Right ventricle myocardium superior (tissue), 1 donor: ENCODE measurements at regions of chr5 and their contacts with region 1.

Region 1: DNA sequence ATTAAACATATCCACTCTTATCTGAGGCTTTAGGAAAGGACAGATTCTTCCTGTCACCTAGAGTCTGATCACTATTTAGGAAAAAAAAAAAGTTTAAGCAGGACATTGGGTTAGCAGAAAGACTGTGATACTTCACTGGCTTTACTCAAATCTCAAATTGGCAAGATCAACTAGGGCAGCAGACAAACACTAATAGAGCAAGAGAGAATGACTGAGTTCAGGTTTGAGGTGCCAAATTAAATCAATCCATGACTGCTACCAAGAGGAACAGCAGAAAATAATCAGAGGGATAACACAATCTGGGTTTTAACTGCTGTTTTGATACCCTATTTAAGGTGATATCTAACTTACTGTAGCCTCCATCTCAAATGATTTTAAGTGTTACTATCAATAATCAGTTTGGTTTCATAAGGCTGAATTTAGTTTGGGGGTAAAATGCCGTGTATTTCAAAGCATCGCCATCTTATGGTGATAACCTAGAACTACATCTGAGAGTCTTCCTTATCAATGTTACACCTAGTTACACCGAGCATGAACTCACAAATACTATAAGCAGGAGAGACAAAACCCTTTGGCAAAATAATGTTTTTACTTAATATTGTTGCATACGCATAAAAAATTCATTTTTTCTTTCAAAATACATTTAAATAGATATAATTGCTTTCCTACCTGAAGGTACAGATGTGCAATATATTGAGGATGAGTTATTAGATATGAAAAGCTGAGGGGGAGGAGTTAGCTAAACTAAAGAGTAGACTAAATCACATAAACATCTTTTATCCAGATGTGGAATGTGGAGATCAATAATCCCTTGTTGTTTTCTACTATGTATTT is 286.4 kb upstream of the CDH12 start:
- DNase-seq: no peak
- ATAC-seq: peak; percentile 78

Region 2: DNA sequence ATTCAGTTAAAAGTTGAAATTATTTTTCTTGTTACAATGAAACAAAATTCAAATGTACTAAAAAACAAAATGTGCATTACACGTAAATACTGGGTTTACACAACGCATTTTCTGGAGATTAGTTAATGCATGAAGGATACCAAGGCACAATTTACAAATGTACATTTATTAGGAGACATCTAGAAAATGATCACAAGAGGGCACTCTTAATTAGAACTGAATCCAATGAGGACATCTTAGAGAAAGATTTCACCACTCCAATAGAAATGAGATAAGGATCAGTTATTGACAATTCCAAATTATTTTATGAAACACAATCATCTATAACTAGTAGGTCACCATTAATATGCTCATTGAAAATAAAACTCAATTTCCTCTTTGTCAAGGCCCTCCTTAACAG is 249.8 kb before region 1 on chr5:
- intact Hi-C with region 1: loop called (anchors 5 kb)
- DNase-seq: no peak
- ATAC-seq: no peak

Region 3: GRCh38 chr5:23042226-23042625 is 97.3 kb before region 1 on chr5:
- intact Hi-C with region 1: no loop called
- DNase-seq: no peak
- ATAC-seq: no peak

Region 4: GRCh38 chr5:23614422-23614821 is 474.9 kb after region 1 on chr5:
- intact Hi-C with region 1: no loop called
- DNase-seq: no peak
- ATAC-seq: no peak